ENCODE measurements at regions of chr1 and their contacts with region 1.

Region 1: GRCh38 chr1:248858891-248859889 is at the start of gene ZNF692:
- DNase-seq: peak; percentile 98
- H3K4me3 Mint-ChIP-seq: peak within 1 kb of the TSS; percentile 91
- H3K27ac Mint-ChIP-seq: peak within 1 kb of the TSS; percentile 92
- H3K4me1 Mint-ChIP-seq: peaks cover 51% of the 10 kb centered on the region
- H3K27me3 Mint-ChIP-seq: no peaks in the 10 kb centered on the region
- total RNA-seq, gene ZNF692: 60.4 to 65.9 TPM

Region 2: DNA sequence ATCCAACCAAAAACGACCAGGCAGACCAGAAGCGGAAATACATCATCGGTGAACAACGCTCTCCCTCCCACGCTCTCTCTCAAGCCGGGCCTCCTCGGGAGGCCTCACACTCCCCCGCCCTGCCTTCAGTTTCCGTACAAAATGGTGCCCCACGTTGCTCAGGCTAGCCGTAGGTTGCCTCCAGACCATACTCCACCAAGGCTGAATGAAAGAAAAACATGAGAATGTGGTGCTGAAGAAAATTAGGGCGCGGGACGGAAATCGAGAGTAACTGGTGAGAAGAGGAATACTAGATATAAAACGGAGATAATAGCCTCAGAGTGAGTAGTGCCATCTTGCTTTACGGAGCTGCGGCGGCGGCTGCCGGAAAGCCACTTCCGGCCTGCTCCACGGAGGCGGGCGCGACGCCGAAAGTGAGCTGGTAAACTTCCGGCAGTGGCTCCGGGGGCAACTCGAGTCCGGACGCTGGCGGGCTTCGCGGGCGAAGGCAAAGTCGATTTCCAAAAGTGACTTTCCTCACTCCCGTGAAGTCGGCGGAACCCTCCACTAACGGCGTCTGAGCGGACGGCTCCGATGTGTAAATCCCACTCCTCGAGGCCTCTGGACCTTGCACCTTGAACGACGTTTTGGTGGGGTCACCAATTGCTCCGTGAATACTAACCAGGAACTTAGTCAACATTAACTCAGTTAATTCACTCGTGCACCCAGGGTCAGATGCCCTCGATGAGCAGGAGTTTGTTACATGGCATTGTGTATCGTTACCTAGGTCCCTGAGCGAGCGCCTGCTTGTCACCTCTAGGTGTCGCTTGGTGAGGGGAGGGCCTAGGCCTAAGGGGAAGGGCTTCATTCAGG is 33.1 kb before region 1 on chr1 and contains the start of gene SH3BP5L:
- CTCF ChIA-PET with region 1: interaction called, 28 read pairs
- POLR2A ChIA-PET with region 1: interaction called, 25 read pairs
- intact Hi-C with region 1: loop called (anchors 1 kb)
- DNase-seq: peak; percentile 94
- H3K4me3 Mint-ChIP-seq: peak within 1 kb of the TSS; percentile 84
- H3K27ac Mint-ChIP-seq: peak within 1 kb of the TSS; percentile 97
- H3K4me1 Mint-ChIP-seq: peaks cover 52% of the 10 kb centered on the region
- H3K27me3 Mint-ChIP-seq: no peaks in the 10 kb centered on the region
- total RNA-seq, gene SH3BP5L: 19.7 to 19.9 TPM

Region 3: GRCh38 chr1:248837794-248838356 is 21.3 kb before region 1 on chr1 and contains the start of gene ZNF672:
- CTCF ChIA-PET with region 1: interaction called, 29 read pairs
- POLR2A ChIA-PET with region 1: interaction called, 47 read pairs
- intact Hi-C with region 1: loop called (anchors 1 kb)
- DNase-seq: peak; percentile 96
- H3K4me3 Mint-ChIP-seq: no peak within 1 kb of the TSS
- H3K27ac Mint-ChIP-seq: no peak within 1 kb of the TSS
- H3K4me1 Mint-ChIP-seq: peaks cover 27% of the 10 kb centered on the region
- H3K27me3 Mint-ChIP-seq: peaks cover 2% of the 10 kb centered on the region
- total RNA-seq, gene ZNF672: 50.3 to 51.4 TPM

Region 4: DNA sequence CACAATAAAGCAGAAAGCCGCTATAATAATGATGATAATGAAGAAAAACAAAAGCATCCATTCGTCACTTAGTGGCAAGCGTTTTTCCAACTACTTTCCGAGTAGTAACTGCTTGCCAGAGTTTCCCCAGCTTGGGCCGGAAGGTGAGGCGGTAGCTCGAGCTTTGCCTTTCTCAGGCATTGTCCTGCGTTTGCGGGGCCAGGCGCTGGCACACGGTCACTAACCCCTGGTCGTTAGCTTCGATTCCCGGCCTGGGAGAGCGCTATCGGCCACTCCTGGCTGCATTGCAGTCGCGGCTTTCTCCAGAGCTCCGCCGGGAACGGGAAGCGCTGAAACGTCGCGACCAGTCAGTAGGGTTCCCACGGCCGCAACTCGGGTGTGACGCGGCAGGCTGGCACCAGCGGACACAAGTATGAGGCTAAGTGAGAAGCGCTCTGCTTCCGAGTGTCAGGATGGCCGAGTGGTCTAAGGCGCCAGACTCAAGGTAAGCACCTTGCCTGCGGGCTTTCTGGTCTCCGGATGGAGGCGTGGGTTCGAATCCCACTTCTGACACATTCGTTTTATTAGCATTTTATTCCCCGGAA is 14.3 kb after region 1 on chr1:
- CTCF ChIA-PET with region 1: interaction called, 22 read pairs
- POLR2A ChIA-PET with region 1: interaction called, 17 read pairs
- intact Hi-C with region 1: loop called (anchors 1 kb)
- DNase-seq: peak; percentile 98
- H3K4me3 Mint-ChIP-seq: peak overlapping the region; percentile 91
- H3K27ac Mint-ChIP-seq: peak overlapping the region; percentile 92
- H3K4me1 Mint-ChIP-seq: peaks cover 24% of the 10 kb centered on the region
- H3K27me3 Mint-ChIP-seq: peaks cover 8% of the 10 kb centered on the region

Region 5: DNA sequence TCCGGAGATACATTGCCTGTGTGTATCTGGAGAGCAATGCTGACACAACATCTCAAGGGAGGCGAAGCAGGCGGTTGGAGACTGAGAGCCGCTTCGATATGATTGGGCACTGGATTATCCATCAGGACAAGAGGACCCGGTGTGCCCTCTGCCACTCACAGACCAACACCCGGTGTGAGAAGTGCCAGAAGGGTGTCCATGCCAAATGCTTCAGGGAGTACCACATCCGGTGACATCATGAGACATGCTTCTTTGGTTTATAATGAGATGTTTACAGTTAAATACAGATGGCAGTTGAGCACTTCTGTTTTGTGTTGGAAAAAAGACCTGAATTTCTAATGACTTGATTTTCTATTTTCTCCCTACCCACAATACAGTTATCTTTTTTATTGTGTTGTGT is 58.9 kb after region 1 on chr1:
- CTCF ChIA-PET with region 1: no interaction called
- POLR2A ChIA-PET with region 1: no interaction called
- intact Hi-C with region 1: no loop called
- DNase-seq: no peak
- H3K4me3 Mint-ChIP-seq: no peak overlapping the region
- H3K27ac Mint-ChIP-seq: no peak overlapping the region
- H3K4me1 Mint-ChIP-seq: no peaks in the 10 kb centered on the region
- H3K27me3 Mint-ChIP-seq: no peaks in the 10 kb centered on the region

Measured in activated CD4-positive, alpha-beta memory T cell treated with anti-CD3 and anti-CD28 coated beads for 36 hours (primary cell).